Tibial artery (tissue), 4 donors: ENCODE measurements at regions of chr7 and their contacts with region 1.

Region 1: DNA sequence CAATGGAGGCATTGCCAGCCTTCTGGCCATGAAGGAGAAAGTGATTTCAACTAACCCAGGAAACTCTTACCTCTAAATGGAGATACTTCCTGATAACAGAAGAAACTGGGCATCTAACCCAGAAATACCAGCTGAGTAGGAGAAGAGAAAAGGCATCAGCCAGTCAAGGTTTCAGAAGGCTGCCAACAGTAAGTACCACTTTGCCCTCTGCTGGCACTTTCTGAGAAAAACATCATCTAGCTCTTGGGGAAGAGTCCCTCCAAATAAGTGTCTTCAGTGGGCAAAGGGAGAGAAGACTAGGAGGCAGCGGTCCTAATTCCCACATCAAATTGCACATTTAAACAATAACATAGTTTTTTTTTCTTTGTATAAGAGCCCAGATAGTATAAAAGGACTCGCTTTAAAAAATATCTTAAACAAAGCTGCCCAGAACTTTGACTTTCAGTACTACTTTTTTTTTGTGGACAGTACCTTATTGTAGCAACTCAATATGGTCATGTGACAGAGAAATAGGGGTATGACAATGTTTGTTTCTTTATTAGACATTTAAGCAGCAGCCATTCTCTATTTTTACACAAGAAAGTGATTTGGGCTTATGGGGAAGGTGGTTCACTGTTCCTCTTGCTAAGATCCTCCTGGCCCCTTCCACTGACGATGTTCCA is 157.3 kb downstream of the CTTNBP2 start:
- DNase-seq: no peak
- H3K4me3 ChIP-seq: no peak overlapping the region
- H3K27ac ChIP-seq: no peak overlapping the region
- H3K4me1 ChIP-seq: no peaks in the 10 kb centered on the region
- H3K27me3 ChIP-seq: no peaks in the 10 kb centered on the region
- CTCF ChIP-seq: peak; percentile 38 to 40

Region 2: DNA sequence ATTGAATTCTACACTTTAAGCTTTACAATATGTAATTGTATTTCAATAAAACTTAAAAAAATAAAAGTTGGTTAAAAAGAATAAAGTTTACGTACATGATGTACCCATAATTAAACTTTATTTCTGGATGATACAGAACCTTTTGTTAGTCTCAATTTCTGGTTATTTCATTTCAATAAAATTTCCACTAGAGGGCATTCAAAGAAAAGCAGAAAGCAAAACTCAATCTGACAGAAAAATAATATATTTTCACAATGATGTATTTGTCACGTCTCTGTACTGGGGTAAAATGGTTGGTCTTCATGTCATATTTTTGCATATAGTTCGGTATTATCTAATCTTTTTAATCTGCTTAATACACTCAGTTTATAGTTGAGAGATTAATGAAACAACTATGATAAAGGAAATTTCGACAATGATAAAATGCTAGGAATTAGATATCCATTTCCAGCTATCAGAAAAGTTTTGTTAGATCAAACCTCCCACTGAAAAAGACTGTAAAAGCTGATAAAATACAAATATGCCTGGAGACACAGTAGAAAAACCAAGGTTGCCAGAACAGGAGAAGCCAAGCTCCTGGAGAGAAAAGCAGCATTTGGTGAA is 316.0 kb before region 1 on chr7:
- intact Hi-C with region 1: loop called (anchors 5 kb)
- DNase-seq: no peak
- H3K4me3 ChIP-seq: no peak overlapping the region
- H3K27ac ChIP-seq: no peak overlapping the region
- H3K4me1 ChIP-seq: peaks cover 0 to 15% (median 0%) of the 10 kb centered on the region in 4 donors
- H3K27me3 ChIP-seq: no peaks in the 10 kb centered on the region
- CTCF ChIP-seq: peak; percentile 22 to 27

Region 3: GRCh38 chr7:117445206-117445605 is 270.7 kb before region 1 on chr7:
- intact Hi-C with region 1: no loop called
- DNase-seq: no peak
- H3K4me3 ChIP-seq: no peak overlapping the region
- H3K27ac ChIP-seq: no peak overlapping the region
- H3K4me1 ChIP-seq: no peaks in the 10 kb centered on the region
- H3K27me3 ChIP-seq: no peaks in the 10 kb centered on the region
- CTCF ChIP-seq: no peak

Region 4: DNA sequence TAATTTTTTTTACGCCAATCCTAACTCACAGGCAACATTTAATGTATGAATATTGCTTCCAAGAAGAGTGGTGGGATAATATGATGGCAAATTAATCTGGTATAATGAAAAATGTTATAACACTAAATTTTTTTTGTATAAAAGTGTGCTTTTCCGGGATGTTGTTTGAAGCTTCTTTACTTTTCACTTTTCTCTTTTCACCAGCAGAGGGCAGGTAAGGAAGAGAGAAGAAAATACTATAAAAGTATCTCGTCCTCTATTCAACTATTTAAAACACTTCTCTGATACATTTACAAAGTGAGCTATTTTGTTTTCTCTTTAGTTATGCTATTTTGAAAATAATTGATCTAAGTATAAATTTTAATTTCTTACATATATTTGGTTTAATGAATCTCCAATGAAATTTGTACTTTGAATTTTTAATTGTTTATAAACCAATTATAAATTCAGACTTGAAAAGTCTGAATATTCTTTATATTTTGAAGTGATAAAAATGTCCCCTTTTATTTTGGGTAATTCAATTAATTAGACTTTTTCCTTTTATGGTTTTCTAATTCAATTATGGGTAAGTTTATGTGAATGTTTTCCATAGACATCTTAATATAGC is 256.8 kb before region 1 on chr7:
- intact Hi-C with region 1: loop called (anchors 5 kb)
- DNase-seq: no peak
- H3K4me3 ChIP-seq: no peak overlapping the region
- H3K27ac ChIP-seq: no peak overlapping the region
- H3K4me1 ChIP-seq: no peaks in the 10 kb centered on the region
- H3K27me3 ChIP-seq: no peaks in the 10 kb centered on the region
- CTCF ChIP-seq: peak; percentile 46 to 51